Activated CD8-positive, alpha-beta T cell treated with anti-CD3 and anti-CD28 coated beads, Interleukin-2, amount 10 ng/mL, durations not matched to agents 7 days and 5 days (primary cell): ENCODE measurements at regions of chr18 and their contacts with region 1.

Region 1: DNA sequence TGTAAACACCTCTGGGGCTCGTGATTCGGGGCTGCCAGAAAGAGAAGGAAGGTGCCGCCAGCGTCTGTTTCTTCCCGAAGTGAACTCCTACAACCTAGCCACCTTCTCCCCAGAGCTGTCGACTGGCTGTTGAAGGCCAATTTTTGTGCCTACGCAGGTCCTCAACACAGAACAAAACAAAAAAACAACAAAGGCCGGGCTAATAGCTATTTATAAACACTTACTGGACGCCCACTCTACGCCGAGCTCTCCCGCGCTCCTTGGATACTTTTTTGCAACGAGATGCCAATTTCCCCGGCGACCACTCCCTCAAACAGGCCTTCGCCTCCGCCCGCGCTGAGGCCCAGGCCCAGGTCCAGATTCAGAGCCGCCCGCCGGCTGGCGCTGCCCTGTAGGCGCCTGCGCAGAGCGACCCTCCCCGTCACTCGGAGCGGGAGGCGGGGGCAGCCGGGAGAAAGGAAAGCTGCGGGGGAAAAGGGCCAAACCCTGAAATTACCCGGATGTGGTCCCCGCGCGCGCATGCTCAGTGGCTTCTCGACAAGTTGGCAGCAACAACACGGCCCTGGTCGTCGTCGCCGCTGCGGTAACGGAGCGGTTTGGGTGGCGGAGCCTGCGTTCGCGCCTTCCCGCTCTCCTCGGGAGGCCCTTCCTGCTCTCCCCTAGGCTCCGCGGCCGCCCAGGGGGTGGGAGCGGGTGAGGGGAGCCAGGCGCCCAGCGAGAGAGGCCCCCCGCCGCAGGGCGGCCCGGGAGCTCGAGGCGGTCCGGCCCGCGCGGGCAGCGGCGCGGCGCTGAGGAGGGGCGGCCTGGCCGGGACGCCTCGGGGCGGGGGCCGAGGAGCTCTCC is at the start of gene SMAD4:
- DNase-seq: peak; percentile 97
- ATAC-seq: peak; percentile 86
- H3K4me3 Mint-ChIP-seq: peak within 1 kb of the TSS; percentile 99
- H3K27ac Mint-ChIP-seq: peak within 1 kb of the TSS; percentile 97
- H3K4me1 Mint-ChIP-seq: peaks cover 58% of the 10 kb centered on the region
- H3K27me3 Mint-ChIP-seq: no peaks in the 10 kb centered on the region
- total RNA-seq, gene SMAD4: 76.9 to 77.6 TPM

Region 2: GRCh38 chr18:50819728-50820378 is 210.1 kb before region 1 on chr18 and contains the start of gene MRO:
- CTCF ChIA-PET with region 1: interaction called, 21 read pairs
- POLR2A ChIA-PET with region 1: no interaction called
- DNase-seq: peak; percentile 85
- ATAC-seq: peak; percentile 99
- H3K4me3 Mint-ChIP-seq: no peak within 1 kb of the TSS
- H3K27ac Mint-ChIP-seq: no peak within 1 kb of the TSS
- H3K4me1 Mint-ChIP-seq: no peaks in the 10 kb centered on the region
- H3K27me3 Mint-ChIP-seq: peaks cover 11% of the 10 kb centered on the region
- total RNA-seq, gene MRO: not detected

Region 3: DNA sequence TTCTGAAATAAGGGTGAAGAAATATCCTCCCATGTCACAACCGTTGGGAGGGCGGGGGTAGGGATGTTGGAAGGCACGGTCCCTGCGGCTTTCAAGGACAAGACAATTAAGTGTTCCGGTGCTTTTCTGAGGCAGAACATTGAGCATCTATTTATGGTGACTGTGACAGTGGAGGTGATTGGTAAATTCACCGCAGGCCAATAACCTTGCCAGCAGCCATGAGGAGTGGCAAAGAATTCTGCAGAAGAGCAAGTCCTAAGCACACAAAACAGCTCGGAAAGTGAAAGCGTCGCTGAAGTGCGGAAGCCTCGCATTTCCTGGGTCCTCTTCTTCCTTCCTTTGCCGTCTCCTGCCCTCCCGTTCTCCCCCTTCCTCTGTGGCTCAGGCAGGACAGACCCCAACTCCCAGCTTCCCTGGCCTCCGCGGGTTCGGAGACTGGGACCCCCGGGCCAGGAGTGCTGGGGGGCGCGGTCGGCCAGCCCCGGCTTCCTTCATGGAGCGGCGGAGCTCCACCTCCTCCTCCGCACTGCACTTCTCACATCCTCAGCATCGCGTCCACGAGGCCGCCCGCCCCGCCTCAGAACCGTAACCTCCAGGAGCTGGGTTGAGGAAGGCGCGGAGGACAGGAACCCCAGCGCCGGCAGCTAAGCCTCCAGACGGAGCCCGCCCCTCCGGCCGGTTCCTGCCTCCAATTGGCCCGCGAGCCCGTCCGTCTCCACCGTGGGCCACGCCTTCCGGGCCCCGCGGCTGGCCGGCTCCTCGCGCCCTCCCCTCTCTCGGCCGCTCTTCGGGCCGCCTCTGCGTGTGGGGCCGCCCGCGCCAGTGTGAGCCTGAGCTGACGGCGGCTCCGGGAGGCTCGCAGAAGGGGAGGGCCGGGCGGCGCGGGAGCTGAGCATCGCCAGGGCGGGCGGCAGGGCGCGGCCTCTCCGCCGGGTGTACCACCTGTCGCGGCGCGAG is 151.3 kb before region 1 on chr18 and contains the start of gene ME2:
- CTCF ChIA-PET with region 1: interaction called, 7 read pairs
- POLR2A ChIA-PET with region 1: interaction called, 38 read pairs
- DNase-seq: peak; percentile 93
- ATAC-seq: peak; percentile 96
- H3K4me3 Mint-ChIP-seq: peak within 1 kb of the TSS; percentile 88
- H3K27ac Mint-ChIP-seq: peak within 1 kb of the TSS; percentile 98
- H3K4me1 Mint-ChIP-seq: peaks cover 24% of the 10 kb centered on the region
- H3K27me3 Mint-ChIP-seq: peaks cover 6% of the 10 kb centered on the region
- total RNA-seq, gene ME2: 91.2 to 92.5 TPM

Region 4: GRCh38 chr18:50967714-50968661 is 61.9 kb before region 1 on chr18 and contains the start of gene ELAC1:
- CTCF ChIA-PET with region 1: interaction called, 3 read pairs
- POLR2A ChIA-PET with region 1: interaction called, 35 read pairs
- DNase-seq: peak; percentile 69
- ATAC-seq: peak; percentile 94
- H3K4me3 Mint-ChIP-seq: peak within 1 kb of the TSS; percentile 94
- H3K27ac Mint-ChIP-seq: peak within 1 kb of the TSS; percentile 94
- H3K4me1 Mint-ChIP-seq: peaks cover 20% of the 10 kb centered on the region
- H3K27me3 Mint-ChIP-seq: no peaks in the 10 kb centered on the region
- total RNA-seq, gene ELAC1: 8.7 to 9.4 TPM

Region 5: DNA sequence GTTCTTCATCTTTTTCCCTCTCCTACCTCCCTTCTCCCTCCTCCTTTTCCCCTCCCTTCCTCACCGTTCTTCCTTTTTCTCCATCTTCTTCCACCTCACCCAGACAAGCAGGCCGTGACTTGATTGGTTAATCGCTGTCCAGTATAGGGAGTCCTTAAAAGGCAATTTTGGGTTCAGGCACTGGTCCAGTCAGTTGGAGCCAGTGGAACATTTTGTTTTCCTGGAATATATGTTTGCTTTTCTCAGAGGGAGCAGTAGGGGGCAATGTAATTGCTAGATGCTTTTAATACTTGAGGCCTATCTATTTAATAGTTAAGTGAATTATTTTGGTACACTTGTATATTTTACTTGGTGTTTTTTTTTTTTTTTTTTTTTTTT is 47.1 kb before region 1 on chr18:
- CTCF ChIA-PET with region 1: no interaction called
- POLR2A ChIA-PET with region 1: no interaction called
- DNase-seq: no peak
- ATAC-seq: no peak
- H3K4me3 Mint-ChIP-seq: no peak overlapping the region
- H3K27ac Mint-ChIP-seq: no peak overlapping the region
- H3K4me1 Mint-ChIP-seq: no peaks in the 10 kb centered on the region
- H3K27me3 Mint-ChIP-seq: no peaks in the 10 kb centered on the region

Region 6: GRCh38 chr18:51051105-51051712 is 21.3 kb after region 1 on chr18:
- CTCF ChIA-PET with region 1: interaction called, 23 read pairs
- POLR2A ChIA-PET with region 1: interaction called, 20 read pairs
- DNase-seq: peak; percentile 41
- ATAC-seq: peak; percentile 90
- H3K4me3 Mint-ChIP-seq: no peak overlapping the region
- H3K27ac Mint-ChIP-seq: no peak overlapping the region
- H3K4me1 Mint-ChIP-seq: peaks cover 23% of the 10 kb centered on the region
- H3K27me3 Mint-ChIP-seq: no peaks in the 10 kb centered on the region

Region 7: GRCh38 chr18:51197661-51198424 is 167.9 kb after region 1 on chr18 and contains the start of gene MEX3C:
- CTCF ChIA-PET with region 1: no interaction called
- POLR2A ChIA-PET with region 1: interaction called, 12 read pairs
- DNase-seq: peak; percentile 99
- ATAC-seq: peak; percentile 86
- H3K4me3 Mint-ChIP-seq: peak within 1 kb of the TSS; percentile 95
- H3K27ac Mint-ChIP-seq: peak within 1 kb of the TSS; percentile 98
- H3K4me1 Mint-ChIP-seq: peaks cover 24% of the 10 kb centered on the region
- H3K27me3 Mint-ChIP-seq: no peaks in the 10 kb centered on the region
- total RNA-seq, gene MEX3C: 40.4 to 45.8 TPM